ENCODE measurements at regions of chr2 and their contacts with region 1.

Region 1: GRCh38 chr2:27133905-27134780 is at the start of gene PREB:
- DNase-seq: peak; percentile 88 to 99
- H3K4me3 ChIP-seq: peak within 1 kb of the TSS; percentile 83
- H3K27ac ChIP-seq: peak within 1 kb of the TSS; percentile 12; the same call in 1 of the 2 replicates
- H3K4me1 ChIP-seq: peaks cover 10% of the 10 kb centered on the region
- H3K27me3 ChIP-seq: no peaks in the 10 kb centered on the region
- CTCF ChIP-seq: no peak; the same call in 1 of the 2 replicates
- total RNA-seq, gene PREB: 35.7 and 36.2 TPM in 2 replicates

Region 2: GRCh38 chr2:27078267-27079194 is 55.6 kb before region 1 on chr2 and contains the start of gene EMILIN1:
- CTCF ChIA-PET with region 1: no interaction called
- POLR2A ChIA-PET with region 1: no interaction called
- intact Hi-C with region 1: no loop called
- DNase-seq: no peak
- H3K4me3 ChIP-seq: no peak within 1 kb of the TSS
- H3K27ac ChIP-seq: no peak within 1 kb of the TSS
- H3K4me1 ChIP-seq: peaks cover 8% of the 10 kb centered on the region
- H3K27me3 ChIP-seq: peaks cover 18% of the 10 kb centered on the region
- CTCF ChIP-seq: no peak
- total RNA-seq, gene EMILIN1: 0.83 and 1.6 TPM in 2 replicates

Region 3: GRCh38 chr2:27217217-27218121 is 83.3 kb after region 1 on chr2 and contains the start of gene CAD:
- CTCF ChIA-PET with region 1: no interaction called
- POLR2A ChIA-PET with region 1: no interaction called
- intact Hi-C with region 1: loop called (anchors 10 kb)
- DNase-seq: peak; percentile 71 to 78
- H3K4me3 ChIP-seq: peak within 1 kb of the TSS; percentile 76
- H3K27ac ChIP-seq: peak within 1 kb of the TSS; percentile 44
- H3K4me1 ChIP-seq: peaks cover 25% of the 10 kb centered on the region
- H3K27me3 ChIP-seq: no peaks in the 10 kb centered on the region
- CTCF ChIP-seq: no peak; the same call in 1 of the 2 replicates
- total RNA-seq, gene CAD: 41.5 and 70.8 TPM in 2 replicates

Region 4: DNA sequence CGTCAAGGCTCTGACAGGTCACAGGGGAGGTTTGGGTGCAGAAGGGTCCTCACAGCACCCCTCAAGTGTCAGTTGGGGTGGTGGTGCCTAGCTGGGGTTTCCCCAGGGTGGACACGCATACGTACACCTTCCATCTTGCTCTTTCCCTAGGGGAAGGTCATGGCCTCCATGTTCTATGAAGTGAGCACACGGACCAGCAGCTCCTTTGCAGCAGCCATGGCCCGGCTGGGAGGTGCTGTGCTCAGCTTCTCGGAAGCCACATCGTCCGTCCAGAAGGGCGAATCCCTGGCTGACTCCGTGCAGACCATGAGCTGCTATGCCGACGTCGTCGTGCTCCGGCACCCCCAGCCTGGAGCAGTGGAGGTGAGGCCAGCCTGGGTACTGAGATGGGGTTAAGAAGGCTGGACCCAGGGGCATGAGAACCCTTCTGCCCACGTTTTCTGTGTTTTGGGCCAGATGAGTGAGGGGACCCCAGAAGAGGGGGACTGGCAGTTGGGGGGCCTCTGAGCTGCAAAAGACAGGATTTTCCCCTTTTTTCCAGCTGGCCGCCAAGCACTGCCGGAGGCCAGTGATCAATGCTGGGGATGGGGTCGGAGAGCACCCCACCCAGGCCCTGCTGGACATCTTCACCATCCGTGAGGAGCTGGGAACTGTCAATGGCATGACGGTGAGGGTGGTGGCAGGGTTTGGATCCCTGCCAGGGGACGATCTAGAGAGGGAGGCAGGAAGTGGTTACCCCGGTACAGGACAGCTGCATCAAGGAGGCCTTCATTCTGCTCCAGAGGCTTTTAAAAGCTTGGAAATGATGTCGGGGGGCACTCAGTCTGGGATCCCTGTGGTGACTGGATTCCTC is 107.8 kb after region 1 on chr2:
- CTCF ChIA-PET with region 1: no interaction called
- POLR2A ChIA-PET with region 1: no interaction called
- intact Hi-C with region 1: no loop called
- DNase-seq: no peak
- H3K4me3 ChIP-seq: no peak overlapping the region
- H3K27ac ChIP-seq: no peak overlapping the region
- H3K4me1 ChIP-seq: no peaks in the 10 kb centered on the region
- H3K27me3 ChIP-seq: no peaks in the 10 kb centered on the region
- CTCF ChIP-seq: no peak